Upper lobe of right lung (tissue), 1 donor: ENCODE measurements at regions of chr9 and their contacts with region 1.

Region 1: DNA sequence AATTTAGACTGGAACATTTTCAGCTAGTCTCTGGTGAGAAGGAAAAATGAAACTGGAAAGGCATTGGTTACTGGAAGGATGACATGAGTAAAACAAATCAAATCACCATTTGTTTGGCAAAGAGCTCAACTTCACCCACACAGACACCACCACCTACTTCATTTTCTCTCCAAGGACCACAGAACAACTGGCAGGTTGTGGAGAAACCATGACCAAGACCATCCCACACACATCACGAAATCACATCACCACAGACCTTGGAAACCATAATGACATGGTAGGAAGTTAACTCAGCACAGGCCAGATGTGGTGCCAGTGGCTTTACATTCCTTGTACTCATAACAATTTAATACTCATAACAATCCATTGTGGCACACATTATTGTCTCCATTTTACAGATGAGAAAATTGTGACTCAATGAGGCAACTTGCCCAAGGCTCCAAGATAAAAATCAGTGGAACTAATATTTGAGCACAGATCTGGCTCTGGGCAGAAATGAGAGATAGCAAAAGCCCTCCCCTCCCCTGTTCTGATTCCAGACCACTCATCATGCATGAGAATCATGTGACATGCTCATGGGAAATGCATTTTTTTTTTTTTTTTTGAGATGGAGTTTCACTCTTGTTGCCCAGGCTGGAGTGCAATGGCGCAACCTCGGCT is 7.5 kb downstream of the OR1K1 start:
- DNase-seq: no peak
- ATAC-seq: peak; percentile 30
- H3K4me3 ChIP-seq: no peak overlapping the region
- H3K27ac ChIP-seq: no peak overlapping the region
- H3K4me1 ChIP-seq: no peaks in the 10 kb centered on the region
- H3K27me3 ChIP-seq: no peaks in the 10 kb centered on the region
- CTCF ChIP-seq: no peak

Region 2: GRCh38 chr9:122464633-122465567 is 342.5 kb before region 1 on chr9:
- intact Hi-C with region 1: loop called (anchors 10 kb)
- DNase-seq: peak; percentile 67
- ATAC-seq: peak; percentile 95
- H3K4me3 ChIP-seq: peak overlapping the region; percentile 54
- H3K27ac ChIP-seq: peak overlapping the region; percentile 40
- H3K4me1 ChIP-seq: peaks cover 11% of the 10 kb centered on the region
- H3K27me3 ChIP-seq: peaks cover 8% of the 10 kb centered on the region
- CTCF ChIP-seq: peak; percentile 82